ENCODE measurements at regions of chr1 and their contacts with region 1.

Region 1: DNA sequence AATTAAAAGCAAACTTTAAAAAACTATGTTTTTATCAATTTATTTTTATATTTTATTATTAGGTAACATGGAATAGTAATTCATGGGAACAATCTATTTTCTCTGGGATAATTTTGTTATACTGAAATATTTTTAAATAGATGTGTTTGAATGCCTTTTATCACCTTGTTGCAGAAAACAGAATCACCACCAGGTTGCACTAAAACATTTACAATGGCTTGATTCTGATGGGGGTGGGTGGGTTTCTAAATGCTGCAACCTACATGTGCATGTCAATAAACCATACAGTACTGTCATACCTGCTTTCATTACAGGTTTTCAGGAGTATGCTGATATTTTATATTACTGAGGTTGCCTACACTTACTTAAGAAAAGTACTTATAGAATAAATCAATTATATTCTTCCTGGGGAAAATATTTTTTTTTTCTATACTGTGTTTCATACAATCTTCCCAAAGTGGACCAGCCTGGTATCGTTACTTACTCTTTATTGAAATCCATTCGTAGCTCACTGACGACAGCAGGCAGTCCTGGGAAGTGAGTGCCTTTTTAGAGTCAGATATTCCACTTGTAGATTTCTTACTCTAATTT is 132.8 kb downstream of the PTPRC start:
- DNase-seq: no peak
- H3K4me3 Mint-ChIP-seq: no peak overlapping the region
- H3K27ac Mint-ChIP-seq: no peak overlapping the region
- H3K4me1 Mint-ChIP-seq: peaks cover 11% of the 10 kb centered on the region
- H3K27me3 Mint-ChIP-seq: peaks cover 5% of the 10 kb centered on the region

Region 2: GRCh38 chr1:199243423-199244061 is 471.9 kb after region 1 on chr1:
- intact Hi-C with region 1: loop called (anchors 1 kb)
- DNase-seq: peak; percentile 70
- H3K4me3 Mint-ChIP-seq: no peak overlapping the region
- H3K27ac Mint-ChIP-seq: no peak overlapping the region
- H3K4me1 Mint-ChIP-seq: peaks cover 18% of the 10 kb centered on the region
- H3K27me3 Mint-ChIP-seq: peaks cover 19% of the 10 kb centered on the region

Region 3: GRCh38 chr1:199463521-199464128 is 692.0 kb after region 1 on chr1:
- intact Hi-C with region 1: loop called (anchors 1 kb)
- DNase-seq: no peak
- H3K4me3 Mint-ChIP-seq: no peak overlapping the region
- H3K27ac Mint-ChIP-seq: no peak overlapping the region
- H3K4me1 Mint-ChIP-seq: no peaks in the 10 kb centered on the region
- H3K27me3 Mint-ChIP-seq: peaks cover 11% of the 10 kb centered on the region

Measured in activated T-helper 1 cell treated with anti-CD3 and anti-CD28 coated beads, Interleukin-12 subunit alpha, Interleukin-12 subunit beta, Interleukin-2, Interleukin-4 antibody, amounts not matched to agents 30 ng/mL and 10 ng/mL and 1 ng/mL, durations not matched to agents 14 hours and 24 hours and 36 hours (primary cell).